CD4-positive, alpha-beta T cell (primary cell): ENCODE measurements at regions of chr7 and their contacts with region 1.

Region 1: GRCh38 chr7:65981965-65982792 is at the start of gene GUSB:
- DNase-seq: peak; percentile 80 to 92 (median 88)
- ATAC-seq: peak; percentile 83
- H3K4me3 ChIP-seq: peak within 1 kb of the TSS; percentile 83
- H3K4me3 Mint-ChIP-seq: peak within 1 kb of the TSS; percentile 92
- H3K27ac ChIP-seq: peak within 1 kb of the TSS in 1 of 2 donors; percentile 68
- H3K27ac Mint-ChIP-seq: peak within 1 kb of the TSS; percentile 84
- H3K4me1 ChIP-seq: peaks cover 31% of the 10 kb centered on the region
- H3K4me1 Mint-ChIP-seq: peaks cover 9% of the 10 kb centered on the region
- H3K27me3 ChIP-seq: no peaks in the 10 kb centered on the region
- H3K27me3 Mint-ChIP-seq: no peaks in the 10 kb centered on the region
- CTCF ChIP-seq: no peak
- total RNA-seq, gene GUSB: 42.9 to 49.7 TPM

Region 2: DNA sequence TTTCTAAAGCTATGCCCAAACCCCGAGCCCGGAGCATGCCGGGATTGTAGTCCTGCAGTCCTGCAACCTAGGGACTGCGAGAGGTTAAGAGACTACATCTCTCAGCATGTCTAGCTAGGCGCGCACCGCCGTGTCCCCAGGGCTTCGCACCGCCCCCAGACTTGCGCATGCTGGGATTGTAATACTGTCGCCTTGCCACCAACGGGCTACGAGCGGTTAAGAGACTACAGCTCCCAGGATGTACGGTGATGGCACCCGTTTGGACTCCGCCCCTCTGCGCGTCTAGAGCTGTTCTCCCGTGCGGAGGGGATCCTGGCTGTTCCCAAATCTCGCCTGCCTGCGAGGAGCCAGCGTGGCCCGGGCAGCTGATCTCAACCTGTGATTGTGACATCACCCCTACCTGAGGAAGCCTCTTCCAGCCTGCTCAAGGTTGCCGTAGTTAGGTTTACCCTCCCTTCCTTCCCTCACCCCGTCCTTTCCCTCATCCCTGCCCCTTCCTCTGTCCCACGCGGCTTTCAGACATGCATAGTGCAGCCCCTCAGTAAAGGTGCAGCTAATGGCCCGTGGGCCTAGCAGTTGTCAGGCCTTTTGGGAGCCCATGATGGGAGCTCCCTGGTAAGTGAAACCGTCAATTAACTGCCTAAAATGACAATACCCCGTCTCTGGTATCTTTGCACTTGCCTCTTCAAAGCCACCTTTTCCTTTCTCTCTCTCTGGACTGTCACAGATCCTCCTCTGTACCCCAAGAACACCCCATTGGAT is 1674.7 kb before region 1 on chr7:
- CTCF ChIA-PET with region 1: no interaction called
- POLR2A ChIA-PET with region 1: no interaction called
- intact Hi-C with region 1: loop called in 1 of 2 experiments (anchors 10 kb)
- DNase-seq: peak; percentile 89 to 98 (median 92)
- ATAC-seq: peak; percentile 98
- H3K4me3 ChIP-seq: peak overlapping the region; percentile 59
- H3K4me3 Mint-ChIP-seq: peak overlapping the region; percentile 98
- H3K27ac ChIP-seq: peak overlapping the region; percentile 65 to 83
- H3K27ac Mint-ChIP-seq: peak overlapping the region; percentile 96
- H3K4me1 ChIP-seq: peaks cover 13% of the 10 kb centered on the region
- H3K4me1 Mint-ChIP-seq: peaks cover 22% of the 10 kb centered on the region
- H3K27me3 ChIP-seq: no peaks in the 10 kb centered on the region
- H3K27me3 Mint-ChIP-seq: no peaks in the 10 kb centered on the region
- CTCF ChIP-seq: no peak

Region 3: DNA sequence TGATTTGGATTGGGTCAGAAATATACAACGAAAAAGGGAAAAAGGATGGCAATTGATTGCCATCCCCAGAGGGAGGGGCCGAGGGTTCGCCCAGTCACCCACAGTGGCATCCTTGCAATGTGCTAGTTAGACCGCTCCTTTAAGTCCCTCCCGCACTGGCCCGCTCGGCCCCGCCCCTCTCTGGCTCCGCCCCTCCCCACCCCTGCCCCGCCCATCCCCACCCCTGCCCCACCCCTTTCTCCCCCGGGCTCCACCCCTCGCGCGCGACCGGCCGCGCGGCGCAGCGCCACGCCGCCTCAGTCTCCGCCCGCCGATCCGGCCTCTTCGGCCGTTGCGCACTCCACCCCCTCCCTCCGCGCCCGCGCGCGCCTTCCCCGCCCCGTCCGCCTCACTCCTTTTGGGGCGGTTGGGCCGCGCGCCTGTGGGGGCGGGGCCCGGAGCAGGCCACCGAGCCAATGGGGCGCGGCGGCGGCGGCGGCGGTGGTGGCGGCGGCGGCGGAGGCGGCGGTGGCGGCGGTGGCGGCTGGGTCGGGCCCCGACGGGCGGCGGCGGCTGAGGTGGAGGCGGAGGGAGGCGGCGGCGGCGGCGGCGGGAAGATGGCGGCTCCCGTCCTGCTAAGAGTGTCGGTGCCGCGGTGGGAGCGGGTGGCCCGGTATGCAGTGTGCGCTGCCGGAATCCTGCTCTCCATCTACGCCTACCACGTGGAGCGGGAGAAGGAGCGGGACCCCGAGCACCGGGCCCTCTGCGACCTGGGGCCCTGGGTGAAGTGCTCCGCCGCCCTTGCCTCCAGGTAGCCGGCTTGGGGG is 109.2 kb before region 1 on chr7 and contains the start of gene VKORC1L1:
- CTCF ChIA-PET with region 1: no interaction called
- POLR2A ChIA-PET with region 1: no interaction called
- intact Hi-C with region 1: loop called in 1 of 2 experiments (anchors 2 kb)
- DNase-seq: peak; percentile 89 to 97 (median 96)
- ATAC-seq: peak; percentile 87
- H3K4me3 ChIP-seq: peak within 1 kb of the TSS; percentile 68
- H3K4me3 Mint-ChIP-seq: peak within 1 kb of the TSS; percentile 91
- H3K27ac ChIP-seq: no peak within 1 kb of the TSS
- H3K27ac Mint-ChIP-seq: peak within 1 kb of the TSS; percentile 80
- H3K4me1 ChIP-seq: peaks cover 13% of the 10 kb centered on the region
- H3K4me1 Mint-ChIP-seq: peaks cover 12% of the 10 kb centered on the region
- H3K27me3 ChIP-seq: no peaks in the 10 kb centered on the region
- H3K27me3 Mint-ChIP-seq: no peaks in the 10 kb centered on the region
- CTCF ChIP-seq: no peak
- total RNA-seq, gene VKORC1L1: 1.9 to 3.0 TPM

Region 4: DNA sequence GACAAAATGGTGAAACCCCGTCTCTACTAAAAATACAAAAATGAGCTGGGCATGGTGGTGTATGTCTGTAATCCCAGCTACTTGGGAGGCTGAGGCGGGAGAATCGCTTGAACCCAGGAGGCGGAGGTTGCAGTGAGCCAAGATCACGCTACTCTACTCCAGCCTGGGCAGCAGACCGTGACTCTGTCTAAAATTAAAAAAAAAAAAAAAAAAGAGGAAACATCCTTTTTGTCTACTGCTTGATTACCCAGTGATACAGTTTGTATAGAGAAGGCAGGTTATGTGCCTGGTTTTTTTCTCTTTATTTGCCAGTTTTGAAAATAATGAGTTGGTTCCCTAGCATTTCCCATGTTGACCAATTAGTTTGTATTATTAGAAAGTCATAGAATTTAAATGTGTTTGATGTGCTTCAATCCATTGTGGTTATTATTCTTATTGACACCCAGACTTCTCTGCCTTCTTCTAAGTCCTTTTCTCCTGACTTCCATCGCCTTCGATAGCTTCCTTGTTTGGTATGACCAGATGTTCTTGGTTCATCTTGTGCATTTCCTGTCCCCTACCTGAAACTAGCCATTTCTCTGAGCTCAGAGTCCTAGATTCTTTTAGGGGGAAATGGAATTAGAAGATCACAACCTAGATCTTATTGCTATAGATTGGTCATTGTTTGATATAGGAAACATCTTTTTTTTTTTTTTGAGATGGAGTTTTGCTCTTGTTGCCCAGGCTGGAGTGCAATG is 66.1 kb before region 1 on chr7:
- CTCF ChIA-PET with region 1: no interaction called
- POLR2A ChIA-PET with region 1: no interaction called
- intact Hi-C with region 1: no loop called
- DNase-seq: no peak
- ATAC-seq: no peak
- H3K4me3 ChIP-seq: no peak overlapping the region
- H3K4me3 Mint-ChIP-seq: no peak overlapping the region
- H3K27ac ChIP-seq: no peak overlapping the region
- H3K27ac Mint-ChIP-seq: no peak overlapping the region
- H3K4me1 ChIP-seq: no peaks in the 10 kb centered on the region
- H3K4me1 Mint-ChIP-seq: no peaks in the 10 kb centered on the region
- H3K27me3 ChIP-seq: no peaks in the 10 kb centered on the region
- H3K27me3 Mint-ChIP-seq: no peaks in the 10 kb centered on the region
- CTCF ChIP-seq: no peak

Region 5: GRCh38 chr7:65971021-65971420 is 11.2 kb before region 1 on chr7:
- CTCF ChIA-PET with region 1: no interaction called
- POLR2A ChIA-PET with region 1: no interaction called
- intact Hi-C with region 1: no loop called
- DNase-seq: no peak
- ATAC-seq: no peak
- H3K4me3 ChIP-seq: no peak overlapping the region
- H3K4me3 Mint-ChIP-seq: no peak overlapping the region
- H3K27ac ChIP-seq: no peak overlapping the region
- H3K27ac Mint-ChIP-seq: no peak overlapping the region
- H3K4me1 ChIP-seq: no peaks in the 10 kb centered on the region
- H3K4me1 Mint-ChIP-seq: no peaks in the 10 kb centered on the region
- H3K27me3 ChIP-seq: no peaks in the 10 kb centered on the region
- H3K27me3 Mint-ChIP-seq: no peaks in the 10 kb centered on the region
- CTCF ChIP-seq: no peak

Region 6: DNA sequence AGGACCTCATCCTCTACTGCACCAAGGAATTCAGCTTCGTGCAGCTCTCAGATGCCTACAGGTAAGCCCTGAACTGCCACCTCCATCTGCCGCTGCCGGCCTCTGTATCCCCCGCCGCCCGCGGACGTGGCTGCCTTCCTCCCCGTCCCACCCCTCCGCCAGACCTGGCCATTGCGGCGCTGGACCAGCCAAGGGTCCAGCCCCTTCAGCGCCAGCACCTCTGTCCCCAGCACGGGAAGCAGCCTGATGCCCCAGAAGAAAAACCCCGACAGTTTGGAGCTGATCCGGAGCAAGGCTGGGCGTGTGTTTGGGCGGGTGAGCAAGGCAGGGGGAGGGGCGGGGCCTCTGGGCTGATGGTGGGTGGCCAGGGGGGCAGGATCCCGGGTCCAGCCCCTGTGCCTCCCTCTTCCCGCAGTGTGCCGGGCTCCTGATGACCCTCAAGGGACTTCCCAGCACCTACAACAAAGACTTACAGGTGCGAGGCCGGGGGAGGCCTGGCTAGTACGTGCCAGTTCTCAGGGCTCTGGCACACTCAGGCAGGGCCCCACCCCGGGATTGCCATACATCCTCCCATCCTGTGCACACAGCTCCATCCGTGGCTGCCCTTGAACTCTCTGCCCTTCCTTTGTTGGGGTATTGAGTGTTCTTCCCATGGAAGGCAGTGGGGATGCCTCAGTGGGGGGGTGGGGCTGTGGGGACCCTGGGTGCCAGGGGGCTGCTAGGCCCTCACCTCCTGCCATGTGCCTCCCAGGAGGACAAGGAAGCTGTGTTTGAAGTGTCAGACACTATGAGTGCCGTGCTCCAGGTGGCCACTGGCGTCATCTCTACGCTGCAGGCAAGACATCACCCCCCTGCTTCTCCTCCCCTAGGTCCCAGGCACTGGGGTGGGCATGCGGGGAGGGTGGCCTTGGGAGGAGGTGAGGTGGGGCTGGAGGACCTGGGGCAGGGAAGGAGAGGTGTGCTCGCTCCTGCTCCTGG is 107.0 kb after region 1 on chr7:
- CTCF ChIA-PET with region 1: no interaction called
- POLR2A ChIA-PET with region 1: no interaction called
- intact Hi-C with region 1: no loop called
- DNase-seq: no peak
- ATAC-seq: no peak
- H3K4me3 ChIP-seq: no peak overlapping the region
- H3K4me3 Mint-ChIP-seq: no peak overlapping the region
- H3K27ac ChIP-seq: no peak overlapping the region
- H3K27ac Mint-ChIP-seq: no peak overlapping the region
- H3K4me1 ChIP-seq: no peaks in the 10 kb centered on the region
- H3K4me1 Mint-ChIP-seq: no peaks in the 10 kb centered on the region
- H3K27me3 ChIP-seq: no peaks in the 10 kb centered on the region
- H3K27me3 Mint-ChIP-seq: no peaks in the 10 kb centered on the region
- CTCF ChIP-seq: no peak

Region 7: GRCh38 chr7:66114793-66115649 is 132.8 kb after region 1 on chr7 and contains the start of gene CRCP:
- CTCF ChIA-PET with region 1: no interaction called
- POLR2A ChIA-PET with region 1: no interaction called
- intact Hi-C with region 1: loop called (anchors 2 to 5 kb)
- DNase-seq: peak; percentile 62 to 92 (median 80)
- ATAC-seq: peak; percentile 92
- H3K4me3 ChIP-seq: peak within 1 kb of the TSS; percentile 93
- H3K4me3 Mint-ChIP-seq: peak within 1 kb of the TSS; percentile 96
- H3K27ac ChIP-seq: peak within 1 kb of the TSS; percentile 86 to 95
- H3K27ac Mint-ChIP-seq: peak within 1 kb of the TSS; percentile 88
- H3K4me1 ChIP-seq: peaks cover 47% of the 10 kb centered on the region
- H3K4me1 Mint-ChIP-seq: peaks cover 50% of the 10 kb centered on the region
- H3K27me3 ChIP-seq: no peaks in the 10 kb centered on the region
- H3K27me3 Mint-ChIP-seq: no peaks in the 10 kb centered on the region
- CTCF ChIP-seq: peak; percentile 19
- total RNA-seq, gene CRCP: 29.2 to 29.4 TPM

Region 8: GRCh38 chr7:66920769-66921395 is 938.7 kb after region 1 on chr7 and contains the start of gene TMEM248:
- CTCF ChIA-PET with region 1: no interaction called
- POLR2A ChIA-PET with region 1: no interaction called
- intact Hi-C with region 1: loop called in 1 of 2 experiments (anchors 5 kb)
- DNase-seq: peak; percentile 85 to 96 (median 91)
- ATAC-seq: peak; percentile 86
- H3K4me3 ChIP-seq: peak within 1 kb of the TSS; percentile 95
- H3K4me3 Mint-ChIP-seq: peak within 1 kb of the TSS; percentile 100
- H3K27ac ChIP-seq: peak within 1 kb of the TSS; percentile 76 to 90
- H3K27ac Mint-ChIP-seq: peak within 1 kb of the TSS; percentile 99
- H3K4me1 ChIP-seq: peaks cover 42% of the 10 kb centered on the region
- H3K4me1 Mint-ChIP-seq: peaks cover 43% of the 10 kb centered on the region
- H3K27me3 ChIP-seq: no peaks in the 10 kb centered on the region
- H3K27me3 Mint-ChIP-seq: no peaks in the 10 kb centered on the region
- CTCF ChIP-seq: no peak
- total RNA-seq, gene TMEM248: 64.7 to 67.4 TPM